ENCODE measurements at regions of chr7 and their contacts with region 1.

Region 1: DNA sequence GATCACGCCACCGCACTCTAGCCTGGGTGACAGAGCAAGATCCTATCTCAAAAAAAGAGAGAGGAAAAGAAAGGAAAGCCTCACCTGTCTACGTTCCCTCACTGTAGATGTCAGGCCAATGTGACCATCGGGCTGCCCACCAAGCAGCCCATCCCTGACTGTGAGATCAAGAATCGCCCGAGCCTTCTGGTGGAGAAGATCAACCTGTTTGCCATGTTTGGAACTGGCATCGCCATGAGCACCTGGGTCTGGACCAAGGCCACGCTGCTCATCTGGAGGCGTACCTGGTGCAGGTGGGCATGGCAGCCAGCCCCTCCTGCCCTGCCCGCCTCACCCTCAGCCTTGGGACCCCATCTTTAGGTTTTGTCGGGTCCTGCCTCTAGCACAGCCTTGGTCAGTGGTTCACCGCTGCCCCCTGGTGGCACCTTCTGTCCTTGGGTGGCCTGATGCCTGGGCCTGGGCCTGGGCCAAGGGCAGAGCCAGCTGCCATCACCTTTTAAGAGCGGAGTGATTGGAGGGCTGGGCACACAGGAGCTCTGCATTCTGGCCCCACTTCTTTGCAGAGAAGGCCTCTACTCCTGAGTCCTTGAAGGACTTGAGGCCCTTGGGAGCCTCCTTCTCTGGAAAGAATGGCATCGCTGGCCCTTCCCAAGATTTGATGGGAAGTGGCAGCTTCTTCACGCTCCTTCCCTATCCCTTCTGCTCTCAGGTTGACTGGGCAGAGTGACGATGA is 14.4 kb upstream of the AHCYL2 start:
- DNase-seq: no peak
- H3K4me3 ChIP-seq: no peak overlapping the region
- CTCF ChIP-seq: peak; percentile 93

Region 2: DNA sequence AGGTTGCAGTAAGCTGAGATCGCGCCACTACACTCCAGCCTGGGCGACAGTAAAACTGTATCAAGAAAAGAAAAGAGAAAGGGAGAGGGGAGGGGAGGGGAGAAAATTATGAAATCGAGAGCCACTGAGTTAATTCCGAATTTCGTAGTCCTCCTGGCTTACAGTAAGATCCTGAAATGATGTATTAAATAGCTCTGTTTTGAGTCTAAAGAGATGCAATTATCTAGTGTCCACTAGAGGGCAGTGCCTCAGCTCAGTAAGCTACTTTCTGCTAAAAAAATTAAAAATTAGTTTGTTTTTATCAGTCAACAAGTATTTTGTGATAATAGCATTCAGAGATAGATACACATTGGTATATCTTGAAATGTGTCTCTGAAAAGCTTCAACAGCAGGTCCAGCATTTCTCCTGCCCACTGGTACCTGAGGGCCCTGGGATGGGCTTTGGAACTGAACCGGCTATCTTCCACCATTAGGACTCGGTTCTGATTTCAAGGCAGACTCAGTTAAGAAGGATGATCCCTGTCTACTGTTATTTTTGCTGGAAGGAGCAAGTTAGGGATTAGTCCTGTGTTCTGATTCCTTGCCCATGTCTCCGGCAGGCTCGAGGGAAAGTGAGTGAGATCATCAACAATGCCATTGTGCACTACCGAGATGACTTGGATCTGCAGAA is 46.4 kb before region 1 on chr7:
- CTCF ChIA-PET with region 1: interaction called, 297 read pairs
- POLR2A ChIA-PET with region 1: no interaction called
- DNase-seq: peak; percentile 14
- H3K4me3 ChIP-seq: no peak overlapping the region
- CTCF ChIP-seq: peak; percentile 59

Region 3: GRCh38 chr7:129188372-129188891 is 22.0 kb before region 1 on chr7 and contains the start of gene SMO:
- CTCF ChIA-PET with region 1: interaction called, 20 read pairs
- POLR2A ChIA-PET with region 1: no interaction called
- DNase-seq: no peak
- H3K4me3 ChIP-seq: peak within 1 kb of the TSS; percentile 77
- CTCF ChIP-seq: no peak

Region 4: DNA sequence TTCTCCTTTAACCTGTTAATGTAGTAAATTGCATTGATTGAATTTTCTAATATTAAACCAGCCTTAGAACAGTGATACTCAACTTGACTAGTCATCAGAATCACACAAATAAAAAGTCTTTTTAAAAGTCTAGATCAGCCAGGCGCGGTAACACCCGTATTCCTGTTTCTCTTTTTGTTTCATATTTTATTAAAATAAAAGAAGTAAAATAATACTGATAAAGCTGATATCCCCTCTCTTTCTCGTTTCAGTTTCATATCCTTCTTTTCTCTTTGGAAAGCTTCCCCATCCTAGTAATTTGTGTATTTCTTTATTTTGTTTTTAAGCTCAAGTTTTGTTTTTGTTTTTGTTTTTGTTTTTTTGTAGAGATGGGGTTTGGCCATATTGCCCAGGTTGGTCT is 12.7 kb before region 1 on chr7:
- CTCF ChIA-PET with region 1: interaction called, 41 read pairs
- POLR2A ChIA-PET with region 1: no interaction called
- DNase-seq: no peak
- H3K4me3 ChIP-seq: no peak overlapping the region
- CTCF ChIP-seq: no peak

Region 5: GRCh38 chr7:129224251-129225205 is 14.1 kb after region 1 on chr7 and contains the start of gene AHCYL2:
- CTCF ChIA-PET with region 1: interaction called, 43 read pairs
- POLR2A ChIA-PET with region 1: no interaction called
- DNase-seq: peak; percentile 71
- H3K4me3 ChIP-seq: peak within 1 kb of the TSS; percentile 78
- CTCF ChIP-seq: no peak

Region 6: DNA sequence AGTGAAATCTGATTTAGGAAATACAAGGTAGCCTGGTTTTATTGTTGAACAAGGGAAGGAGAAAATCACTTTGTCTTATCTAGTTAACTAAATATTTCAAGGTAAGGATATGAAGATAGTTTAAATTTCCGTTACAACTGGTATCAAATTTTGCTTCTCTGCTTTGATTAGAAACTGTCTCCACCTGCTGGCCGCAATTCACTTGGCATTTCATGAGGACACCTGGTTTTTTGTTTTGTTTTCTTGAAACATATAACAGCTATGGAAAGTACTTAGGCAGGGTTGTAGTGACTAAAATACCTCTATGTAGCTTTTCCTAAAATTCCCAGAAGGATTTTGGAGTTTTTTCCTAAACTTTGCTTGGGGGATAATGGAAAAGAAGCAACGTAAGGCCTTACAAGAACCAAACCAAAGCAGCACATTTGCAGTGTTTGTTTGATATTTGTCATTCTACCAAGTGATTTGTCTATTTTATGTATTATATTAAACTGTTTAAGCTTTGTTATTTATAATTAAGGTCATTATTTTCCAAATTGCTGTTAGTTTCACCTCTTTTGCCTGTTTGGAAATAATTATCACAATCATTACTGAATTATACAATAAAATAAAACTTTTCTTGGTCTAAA is 88.0 kb after region 1 on chr7:
- CTCF ChIA-PET with region 1: interaction called, 23 read pairs
- POLR2A ChIA-PET with region 1: no interaction called
- DNase-seq: no peak
- H3K4me3 ChIP-seq: no peak overlapping the region
- CTCF ChIP-seq: peak; percentile 56

Measured in AG04449 (cell line).